ENCODE measurements at regions of chr12 and their contacts with region 1.

Region 1: DNA sequence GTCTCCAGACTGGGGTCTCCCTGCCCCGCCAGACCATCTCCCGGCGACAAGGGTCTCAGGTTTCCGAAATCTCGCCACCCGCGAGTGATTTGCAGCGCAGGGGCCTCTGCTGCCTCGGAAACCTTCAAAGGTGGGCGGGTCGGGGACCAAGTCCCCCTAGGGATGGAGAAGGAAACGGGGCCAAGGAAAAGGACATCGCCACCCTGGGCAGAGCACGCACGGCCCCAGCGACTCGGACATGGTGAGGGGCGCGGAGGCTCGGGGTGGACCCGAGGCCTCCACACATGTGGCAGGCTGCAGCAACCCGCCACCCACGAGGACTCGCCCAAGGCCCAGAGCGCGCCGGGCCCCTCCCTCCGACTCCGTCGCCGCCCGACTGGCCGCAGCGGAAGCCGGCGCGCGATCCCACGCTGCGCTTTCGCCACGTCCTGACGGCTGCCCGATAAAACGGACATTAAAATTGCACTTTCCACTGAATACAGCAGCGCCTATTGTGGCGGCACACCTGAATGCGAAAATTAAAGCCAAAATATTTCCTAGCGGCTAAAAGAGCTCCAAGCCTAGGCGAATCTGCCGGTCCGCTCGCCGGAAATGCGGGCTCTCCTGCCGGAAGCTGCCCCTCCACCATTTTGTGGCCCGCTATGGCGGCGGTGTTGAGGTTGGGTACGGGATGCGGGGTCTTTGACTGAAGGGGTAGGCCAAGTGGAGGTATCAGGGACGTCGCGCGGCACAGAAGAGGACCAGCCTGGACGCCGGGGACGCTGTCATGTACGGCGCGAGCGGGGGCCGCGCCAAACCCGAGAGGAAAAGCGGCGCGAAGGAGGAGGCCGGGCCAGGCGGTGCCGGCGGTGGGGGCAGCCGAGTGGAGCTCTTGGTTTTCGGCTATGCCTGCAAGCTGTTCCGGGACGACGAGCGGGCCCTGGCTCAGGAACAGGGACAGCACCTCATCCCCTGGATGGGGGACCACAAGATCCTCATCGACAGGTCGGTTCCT is at the start of gene SFSWAP:
- DNase-seq: peak; percentile 84
- H3K4me3 ChIP-seq: peak within 1 kb of the TSS; percentile 99
- H3K27ac ChIP-seq: peak within 1 kb of the TSS; percentile 100
- H3K4me1 ChIP-seq: peaks cover 6% of the 10 kb centered on the region
- H3K27me3 ChIP-seq: no peaks in the 10 kb centered on the region
- CTCF ChIP-seq: no peak
- total RNA-seq, gene SFSWAP: 65.4 and 66.4 TPM in 2 replicates

Region 2: DNA sequence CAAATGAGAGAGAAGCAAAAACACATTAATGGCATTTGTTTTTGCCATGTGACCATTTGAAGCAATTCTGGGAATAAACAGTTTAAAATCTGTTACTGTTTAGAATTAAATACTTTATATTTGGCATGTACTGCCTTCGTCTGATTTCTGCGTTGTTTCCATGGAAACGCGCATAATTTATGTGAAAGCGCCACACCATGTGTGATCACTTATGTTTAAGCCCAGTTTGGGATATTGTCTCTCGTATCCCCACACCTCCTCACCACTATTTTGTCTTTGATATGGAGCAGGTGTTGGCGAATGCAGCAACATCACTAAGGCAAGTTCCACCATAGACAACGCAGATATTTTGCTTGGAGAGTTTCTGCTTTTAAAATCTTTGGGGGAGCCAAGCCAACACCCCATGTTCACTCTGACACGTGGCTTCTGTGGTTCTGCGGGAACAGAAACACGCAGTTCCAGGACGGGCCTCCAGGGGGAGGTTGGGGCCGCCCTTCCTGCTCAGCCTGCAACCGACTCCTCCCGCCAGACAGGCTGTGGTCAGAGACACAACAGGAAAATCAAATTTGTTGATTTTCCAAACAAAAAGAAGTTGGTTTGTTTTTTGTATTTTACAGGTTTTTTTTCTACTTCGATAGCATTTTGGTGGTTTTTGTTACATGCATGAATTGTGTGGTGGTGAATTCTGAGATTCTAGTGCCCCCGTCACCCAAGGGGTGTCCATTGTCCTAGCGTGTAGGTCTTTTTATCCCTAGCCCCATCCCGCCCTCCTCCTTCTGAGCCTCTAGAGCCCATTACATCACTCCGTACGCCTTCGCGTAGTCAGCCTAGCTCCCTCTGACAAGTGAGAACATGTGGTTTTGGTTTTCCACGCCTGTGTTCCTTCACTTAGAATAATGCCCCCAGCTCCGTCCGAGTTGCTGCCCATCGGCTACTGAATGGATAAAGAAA is 101.7 kb before region 1 on chr12:
- CTCF ChIA-PET with region 1: no interaction called
- POLR2A ChIA-PET with region 1: no interaction called
- intact Hi-C with region 1: loop called (anchors 10 kb)
- DNase-seq: peak; percentile 69
- H3K4me3 ChIP-seq: no peak overlapping the region
- H3K27ac ChIP-seq: no peak overlapping the region
- H3K4me1 ChIP-seq: no peaks in the 10 kb centered on the region
- H3K27me3 ChIP-seq: peaks cover 42% of the 10 kb centered on the region
- CTCF ChIP-seq: peak; percentile 86

Region 3: DNA sequence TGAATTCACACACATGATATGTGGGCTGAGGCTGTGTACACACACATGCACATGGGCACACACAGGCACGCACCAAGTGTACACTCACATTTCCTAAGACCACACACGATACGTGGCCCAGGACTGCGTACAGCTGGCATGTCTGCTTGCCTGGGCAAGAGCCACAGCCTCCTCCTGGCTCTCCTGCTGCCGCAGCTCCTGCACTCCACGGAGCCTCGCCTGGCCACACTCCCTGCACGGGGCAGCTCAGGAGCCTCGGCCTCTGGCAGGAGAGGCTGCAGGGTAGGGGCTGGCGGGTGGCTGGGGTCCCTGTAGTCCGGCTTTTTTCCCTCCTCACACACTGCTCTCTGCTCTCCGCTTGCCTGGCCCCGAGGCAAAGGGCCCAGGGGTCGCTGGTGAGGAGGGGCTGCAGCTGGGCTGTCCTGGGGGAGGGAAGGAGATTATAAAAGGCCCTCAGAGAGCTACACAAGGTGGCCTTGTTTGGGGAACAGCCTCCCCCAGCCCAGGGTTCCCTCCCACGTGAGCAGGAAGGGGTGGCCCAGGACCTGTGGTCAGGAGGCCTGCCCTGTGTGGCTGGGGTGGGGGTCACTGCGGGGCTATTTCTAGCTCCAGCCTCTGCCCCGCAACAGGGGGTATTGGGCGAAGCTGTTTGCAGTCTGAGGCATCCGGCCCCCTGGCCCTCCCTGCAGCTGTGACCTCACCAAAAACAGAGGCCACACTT is 88.9 kb before region 1 on chr12:
- CTCF ChIA-PET with region 1: no interaction called
- POLR2A ChIA-PET with region 1: no interaction called
- intact Hi-C with region 1: no loop called
- DNase-seq: no peak
- H3K4me3 ChIP-seq: no peak overlapping the region
- H3K27ac ChIP-seq: no peak overlapping the region
- H3K4me1 ChIP-seq: peaks cover 15% of the 10 kb centered on the region
- H3K27me3 ChIP-seq: peaks cover 32% of the 10 kb centered on the region
- CTCF ChIP-seq: no peak

Region 4: GRCh38 chr12:131720921-131721320 is 10.2 kb after region 1 on chr12:
- CTCF ChIA-PET with region 1: no interaction called
- POLR2A ChIA-PET with region 1: no interaction called
- intact Hi-C with region 1: no loop called
- DNase-seq: no peak
- H3K4me3 ChIP-seq: no peak overlapping the region
- H3K27ac ChIP-seq: no peak overlapping the region
- H3K4me1 ChIP-seq: no peaks in the 10 kb centered on the region
- H3K27me3 ChIP-seq: no peaks in the 10 kb centered on the region
- CTCF ChIP-seq: no peak